ENCODE measurements at regions of chr6 and their contacts with region 1.

Region 1: GRCh38 chr6:122609856-122610689 is at the start of gene PKIB:
- H3K4me3 ChIP-seq: peak within 1 kb of the TSS; percentile 77
- H3K27ac ChIP-seq: peak within 1 kb of the TSS; percentile 57; the same call in 1 of the 2 replicates
- H3K4me1 ChIP-seq: no peaks in the 10 kb centered on the region
- CTCF ChIP-seq: peak; percentile 81; the same call in 1 of the 2 replicates

Region 2: GRCh38 chr6:122511193-122511924 is 98.7 kb before region 1 on chr6:
- CTCF ChIA-PET with region 1: no interaction called
- POLR2A ChIA-PET with region 1: no interaction called
- H3K4me3 ChIP-seq: no peak overlapping the region
- H3K27ac ChIP-seq: no peak overlapping the region
- H3K4me1 ChIP-seq: no peaks in the 10 kb centered on the region
- CTCF ChIP-seq: no peak

Region 3: GRCh38 chr6:122620879-122621278 is 10.8 kb after region 1 on chr6:
- CTCF ChIA-PET with region 1: interaction called, 17 read pairs
- POLR2A ChIA-PET with region 1: interaction called, 12 read pairs
- H3K4me3 ChIP-seq: peak overlapping the region; percentile 2; the same call in 1 of the 2 replicates
- H3K27ac ChIP-seq: no peak overlapping the region
- H3K4me1 ChIP-seq: peaks cover 18% of the 10 kb centered on the region
- CTCF ChIP-seq: no peak

Region 4: GRCh38 chr6:122631571-122632225 is 21.6 kb after region 1 on chr6:
- CTCF ChIA-PET with region 1: no interaction called
- POLR2A ChIA-PET with region 1: no interaction called
- H3K4me3 ChIP-seq: no peak overlapping the region
- H3K27ac ChIP-seq: no peak overlapping the region
- H3K4me1 ChIP-seq: no peaks in the 10 kb centered on the region
- CTCF ChIP-seq: no peak

Measured in HEK293 (cell line).